CD4-positive, alpha-beta T cell (primary cell): ENCODE measurements at regions of chr16 and their contacts with region 1.

Region 1: DNA sequence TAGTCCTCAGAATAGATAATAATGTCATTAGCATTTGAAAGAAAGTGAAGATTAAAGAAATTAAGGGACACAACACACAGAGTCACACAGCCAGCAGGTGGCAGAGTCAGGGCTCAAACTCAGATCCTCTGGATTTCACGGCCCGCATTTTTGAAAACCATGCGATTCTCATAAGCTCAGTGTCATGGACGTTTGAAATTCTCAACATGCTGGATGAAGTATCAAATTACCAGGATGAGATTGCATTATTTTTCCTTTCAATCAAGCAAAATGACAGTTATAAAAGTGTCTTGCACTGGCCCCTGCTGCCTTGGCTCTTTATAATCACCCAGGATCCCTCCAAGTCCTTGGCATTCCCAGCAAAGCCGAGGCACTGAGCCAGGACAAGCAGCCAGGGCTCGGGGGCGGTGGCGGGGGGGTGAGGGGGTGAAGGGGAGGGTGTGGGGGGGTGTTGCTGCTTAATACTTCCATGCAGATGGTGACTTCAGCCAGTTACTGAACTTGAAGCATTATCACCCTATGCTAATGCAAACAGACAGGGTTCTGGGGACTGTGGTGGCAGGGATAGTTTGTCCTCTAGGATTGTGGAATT is 6.6 kb upstream of the BMERB1 start:
- DNase-seq: peak; percentile 33 to 71 (median 54)
- ATAC-seq: no peak
- H3K4me3 ChIP-seq: no peak overlapping the region
- H3K4me3 Mint-ChIP-seq: no peak overlapping the region
- H3K27ac ChIP-seq: no peak overlapping the region
- H3K27ac Mint-ChIP-seq: no peak overlapping the region
- H3K4me1 ChIP-seq: no peaks in the 10 kb centered on the region
- H3K4me1 Mint-ChIP-seq: no peaks in the 10 kb centered on the region
- H3K27me3 ChIP-seq: no peaks in the 10 kb centered on the region
- H3K27me3 Mint-ChIP-seq: peaks cover 9% of the 10 kb centered on the region
- CTCF ChIP-seq: peak; percentile 60

Region 2: GRCh38 chr16:15592324-15592723 is 164.6 kb after region 1 on chr16:
- CTCF ChIA-PET with region 1: no interaction called
- POLR2A ChIA-PET with region 1: interaction called, 3 read pairs
- intact Hi-C with region 1: loop called (anchors 2 to 10 kb)
- DNase-seq: peak in 13 of 14 experiments; percentile 8 to 72 (median 38)
- ATAC-seq: no peak
- H3K4me3 ChIP-seq: no peak overlapping the region
- H3K4me3 Mint-ChIP-seq: no peak overlapping the region
- H3K27ac ChIP-seq: peak overlapping the region; percentile 21 to 34
- H3K27ac Mint-ChIP-seq: peak overlapping the region; percentile 61
- H3K4me1 ChIP-seq: peaks cover 36% of the 10 kb centered on the region
- H3K4me1 Mint-ChIP-seq: peaks cover 20% of the 10 kb centered on the region
- H3K27me3 ChIP-seq: no peaks in the 10 kb centered on the region
- H3K27me3 Mint-ChIP-seq: no peaks in the 10 kb centered on the region
- CTCF ChIP-seq: no peak

Region 3: GRCh38 chr16:15704545-15704987 is 276.8 kb after region 1 on chr16:
- CTCF ChIA-PET with region 1: interaction called, 7 read pairs
- POLR2A ChIA-PET with region 1: no interaction called
- intact Hi-C with region 1: loop called (anchors 1 kb)
- DNase-seq: peak; percentile 58 to 84 (median 70)
- ATAC-seq: peak; percentile 76
- H3K4me3 ChIP-seq: no peak overlapping the region
- H3K4me3 Mint-ChIP-seq: no peak overlapping the region
- H3K27ac ChIP-seq: no peak overlapping the region
- H3K27ac Mint-ChIP-seq: peak overlapping the region; percentile 72
- H3K4me1 ChIP-seq: peaks cover 7% of the 10 kb centered on the region
- H3K4me1 Mint-ChIP-seq: peaks cover 18% of the 10 kb centered on the region
- H3K27me3 ChIP-seq: no peaks in the 10 kb centered on the region
- H3K27me3 Mint-ChIP-seq: no peaks in the 10 kb centered on the region
- CTCF ChIP-seq: peak; percentile 88

Region 4: GRCh38 chr16:15822957-15823356 is 395.2 kb after region 1 on chr16:
- CTCF ChIA-PET with region 1: no interaction called
- POLR2A ChIA-PET with region 1: no interaction called
- intact Hi-C with region 1: loop called in 1 of 2 experiments (anchors 5 kb)
- DNase-seq: no peak
- ATAC-seq: no peak
- H3K4me3 ChIP-seq: no peak overlapping the region
- H3K4me3 Mint-ChIP-seq: no peak overlapping the region
- H3K27ac ChIP-seq: no peak overlapping the region
- H3K27ac Mint-ChIP-seq: no peak overlapping the region
- H3K4me1 ChIP-seq: no peaks in the 10 kb centered on the region
- H3K4me1 Mint-ChIP-seq: no peaks in the 10 kb centered on the region
- H3K27me3 ChIP-seq: no peaks in the 10 kb centered on the region
- H3K27me3 Mint-ChIP-seq: no peaks in the 10 kb centered on the region
- CTCF ChIP-seq: no peak